CD8-positive, alpha-beta memory T cell (primary cell): ENCODE measurements at regions of chr9 and their contacts with region 1.

Region 1: GRCh38 chr9:107340920-107341632 is 58.0 kb downstream of the RAD23B start:
- DNase-seq: peak; percentile 61 to 86 (median 70)
- H3K4me3 ChIP-seq: no peak overlapping the region
- H3K4me3 Mint-ChIP-seq: peak overlapping the region in 3 of 7 donors; percentile 35 to 68 (median 38)
- H3K27ac ChIP-seq: no peak overlapping the region
- H3K27ac Mint-ChIP-seq: peak overlapping the region in 3 of 8 donors; percentile 40 to 75 (median 61)
- H3K4me1 ChIP-seq: no peaks in the 10 kb centered on the region
- H3K4me1 Mint-ChIP-seq: peaks cover 7 to 12% (median 12%) of the 10 kb centered on the region in 3 donors
- H3K27me3 ChIP-seq: no peaks in the 10 kb centered on the region
- H3K27me3 Mint-ChIP-seq: no peaks in the 10 kb centered on the region

Region 2: DNA sequence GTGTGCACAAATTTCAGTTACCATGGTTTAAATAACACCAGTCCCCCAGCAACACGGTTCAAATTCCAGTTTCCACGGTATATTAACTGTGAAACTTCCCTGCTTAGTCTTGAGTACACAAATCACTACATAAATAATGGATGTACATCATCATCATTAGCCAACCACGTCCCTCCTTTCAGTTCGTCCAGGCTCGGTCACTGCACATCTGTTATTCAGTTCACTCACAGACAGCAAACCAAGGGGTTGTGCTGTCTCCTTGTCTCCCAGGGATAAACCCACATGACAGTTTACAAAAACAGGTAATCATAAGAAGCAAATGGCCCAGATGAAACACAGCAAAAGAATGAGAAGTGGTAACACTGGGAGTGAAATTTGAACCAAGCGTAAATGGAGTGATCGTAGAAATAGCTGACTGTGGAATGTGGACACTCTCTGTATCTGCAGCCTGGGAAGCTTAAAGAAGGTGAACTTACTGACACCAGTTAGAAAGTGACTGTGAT is 119.0 kb before region 1 on chr9:
- CTCF ChIA-PET with region 1: interaction called, 10 read pairs
- POLR2A ChIA-PET with region 1: no interaction called
- DNase-seq: no peak
- H3K4me3 ChIP-seq: no peak overlapping the region
- H3K4me3 Mint-ChIP-seq: no peak overlapping the region
- H3K27ac ChIP-seq: no peak overlapping the region
- H3K27ac Mint-ChIP-seq: no peak overlapping the region
- H3K4me1 ChIP-seq: no peaks in the 10 kb centered on the region
- H3K4me1 Mint-ChIP-seq: no peaks in the 10 kb centered on the region
- H3K27me3 ChIP-seq: no peaks in the 10 kb centered on the region
- H3K27me3 Mint-ChIP-seq: peaks cover 2 to 17% of the 10 kb centered on the region in 2 donors

Region 3: DNA sequence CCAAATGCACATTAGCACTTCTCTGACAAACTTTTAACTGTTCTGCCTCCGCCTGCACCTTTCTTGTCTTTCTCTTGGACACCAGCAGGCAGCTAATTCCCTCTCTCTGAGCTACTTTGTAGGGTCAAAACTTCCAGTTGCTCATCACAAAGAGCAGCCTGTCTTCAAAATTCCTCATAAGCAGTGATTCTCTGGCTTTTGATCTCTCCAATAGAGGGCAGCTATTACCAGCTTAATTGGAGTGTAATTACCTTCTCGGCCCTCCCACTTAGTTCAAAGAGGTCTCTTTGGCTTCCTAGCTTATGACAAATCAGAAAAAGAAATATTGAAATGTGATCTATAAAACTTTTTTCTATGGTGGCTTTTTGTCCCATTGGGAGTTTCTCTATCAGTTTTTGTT is 101.6 kb before region 1 on chr9:
- CTCF ChIA-PET with region 1: interaction called, 55 read pairs
- POLR2A ChIA-PET with region 1: no interaction called
- DNase-seq: peak in 1 of 5 donors; percentile 17
- H3K4me3 ChIP-seq: no peak overlapping the region
- H3K4me3 Mint-ChIP-seq: no peak overlapping the region
- H3K27ac ChIP-seq: no peak overlapping the region
- H3K27ac Mint-ChIP-seq: no peak overlapping the region
- H3K4me1 ChIP-seq: no peaks in the 10 kb centered on the region
- H3K4me1 Mint-ChIP-seq: peaks cover 5 to 10% (median 7%) of the 10 kb centered on the region in 3 donors
- H3K27me3 ChIP-seq: no peaks in the 10 kb centered on the region
- H3K27me3 Mint-ChIP-seq: peaks cover 3 to 5% of the 10 kb centered on the region in 2 donors

Region 4: GRCh38 chr9:107251756-107252322 is 89.2 kb before region 1 on chr9:
- CTCF ChIA-PET with region 1: interaction called, 12 read pairs
- POLR2A ChIA-PET with region 1: no interaction called
- DNase-seq: no peak
- H3K4me3 ChIP-seq: no peak overlapping the region
- H3K4me3 Mint-ChIP-seq: no peak overlapping the region
- H3K27ac ChIP-seq: no peak overlapping the region
- H3K27ac Mint-ChIP-seq: no peak overlapping the region
- H3K4me1 ChIP-seq: no peaks in the 10 kb centered on the region
- H3K4me1 Mint-ChIP-seq: peaks cover 0 to 1% (median 1%) of the 10 kb centered on the region in 3 donors
- H3K27me3 ChIP-seq: no peaks in the 10 kb centered on the region
- H3K27me3 Mint-ChIP-seq: peaks cover 12 to 14% of the 10 kb centered on the region in 2 donors

Region 5: GRCh38 chr9:107282753-107283625 is 58.1 kb before region 1 on chr9 and contains the start of gene RAD23B:
- CTCF ChIA-PET with region 1: interaction called, 13 read pairs
- POLR2A ChIA-PET with region 1: interaction called, 3 read pairs
- DNase-seq: peak; percentile 97 to 99 (median 99)
- H3K4me3 ChIP-seq: peak within 1 kb of the TSS; percentile 86
- H3K4me3 Mint-ChIP-seq: peak within 1 kb of the TSS; percentile 89 to 99 (median 96)
- H3K27ac ChIP-seq: peak within 1 kb of the TSS; percentile 85
- H3K27ac Mint-ChIP-seq: peak within 1 kb of the TSS; percentile 76 to 99 (median 97)
- H3K4me1 ChIP-seq: peaks cover 32% of the 10 kb centered on the region
- H3K4me1 Mint-ChIP-seq: peaks cover 40 to 47% (median 46%) of the 10 kb centered on the region in 3 donors
- H3K27me3 ChIP-seq: no peaks in the 10 kb centered on the region
- H3K27me3 Mint-ChIP-seq: peaks cover 0 to 3% of the 10 kb centered on the region in 2 donors
- total RNA-seq, gene RAD23B: 146 to 150 TPM

Region 6: DNA sequence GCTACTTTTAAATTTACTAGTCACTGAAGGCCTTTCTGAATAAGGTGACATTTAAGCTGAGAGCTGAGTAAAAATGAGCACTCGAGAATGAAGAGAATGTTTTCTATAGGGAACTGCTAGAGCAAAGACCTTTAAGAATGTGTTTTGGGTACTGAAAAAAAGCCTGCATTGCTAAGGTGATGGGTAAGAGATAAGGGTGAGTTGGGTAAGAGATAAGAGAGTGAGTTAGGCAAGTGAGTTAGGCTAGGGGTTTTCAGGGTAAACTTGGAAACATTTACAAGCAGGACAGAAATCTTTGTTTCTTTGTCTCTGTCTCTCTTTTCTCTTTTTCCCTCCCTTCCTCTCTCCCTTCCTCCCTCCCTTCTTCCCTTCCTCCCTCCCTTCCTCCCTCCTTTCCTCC is 52.4 kb before region 1 on chr9:
- CTCF ChIA-PET with region 1: interaction called, 13 read pairs
- POLR2A ChIA-PET with region 1: no interaction called
- DNase-seq: no peak
- H3K4me3 ChIP-seq: no peak overlapping the region
- H3K4me3 Mint-ChIP-seq: peak overlapping the region in 4 of 7 donors; percentile 0 to 44 (median 24)
- H3K27ac ChIP-seq: no peak overlapping the region
- H3K27ac Mint-ChIP-seq: peak overlapping the region in 2 of 8 donors; percentile 30 to 47
- H3K4me1 ChIP-seq: peaks cover 66% of the 10 kb centered on the region
- H3K4me1 Mint-ChIP-seq: peaks cover 76 to 96% (median 94%) of the 10 kb centered on the region in 3 donors
- H3K27me3 ChIP-seq: no peaks in the 10 kb centered on the region
- H3K27me3 Mint-ChIP-seq: no peaks in the 10 kb centered on the region

Region 7: DNA sequence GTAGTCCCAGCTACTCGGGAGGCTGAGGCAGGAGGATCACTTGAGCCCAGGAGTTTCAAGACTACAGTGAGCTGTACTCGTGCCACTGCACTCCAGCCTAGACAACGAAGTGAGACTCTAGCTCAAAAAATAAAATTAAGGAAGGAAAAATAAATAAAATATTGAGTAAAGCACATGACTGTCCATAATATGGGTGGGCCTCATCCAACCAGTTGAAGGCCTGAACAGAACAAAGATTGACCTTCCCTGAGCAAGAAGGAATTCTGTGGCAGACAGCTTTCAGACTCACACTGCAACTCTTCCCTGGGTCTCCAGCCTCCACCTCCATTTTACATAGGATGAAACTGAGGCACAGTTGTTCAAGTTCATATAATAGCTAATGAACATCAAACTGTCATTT is 14.3 kb after region 1 on chr9:
- CTCF ChIA-PET with region 1: interaction called, 16 read pairs
- POLR2A ChIA-PET with region 1: no interaction called
- DNase-seq: no peak
- H3K4me3 ChIP-seq: no peak overlapping the region
- H3K4me3 Mint-ChIP-seq: no peak overlapping the region
- H3K27ac ChIP-seq: no peak overlapping the region
- H3K27ac Mint-ChIP-seq: no peak overlapping the region
- H3K4me1 ChIP-seq: no peaks in the 10 kb centered on the region
- H3K4me1 Mint-ChIP-seq: no peaks in the 10 kb centered on the region
- H3K27me3 ChIP-seq: no peaks in the 10 kb centered on the region
- H3K27me3 Mint-ChIP-seq: peaks cover 9 to 40% of the 10 kb centered on the region in 2 donors

Region 8: DNA sequence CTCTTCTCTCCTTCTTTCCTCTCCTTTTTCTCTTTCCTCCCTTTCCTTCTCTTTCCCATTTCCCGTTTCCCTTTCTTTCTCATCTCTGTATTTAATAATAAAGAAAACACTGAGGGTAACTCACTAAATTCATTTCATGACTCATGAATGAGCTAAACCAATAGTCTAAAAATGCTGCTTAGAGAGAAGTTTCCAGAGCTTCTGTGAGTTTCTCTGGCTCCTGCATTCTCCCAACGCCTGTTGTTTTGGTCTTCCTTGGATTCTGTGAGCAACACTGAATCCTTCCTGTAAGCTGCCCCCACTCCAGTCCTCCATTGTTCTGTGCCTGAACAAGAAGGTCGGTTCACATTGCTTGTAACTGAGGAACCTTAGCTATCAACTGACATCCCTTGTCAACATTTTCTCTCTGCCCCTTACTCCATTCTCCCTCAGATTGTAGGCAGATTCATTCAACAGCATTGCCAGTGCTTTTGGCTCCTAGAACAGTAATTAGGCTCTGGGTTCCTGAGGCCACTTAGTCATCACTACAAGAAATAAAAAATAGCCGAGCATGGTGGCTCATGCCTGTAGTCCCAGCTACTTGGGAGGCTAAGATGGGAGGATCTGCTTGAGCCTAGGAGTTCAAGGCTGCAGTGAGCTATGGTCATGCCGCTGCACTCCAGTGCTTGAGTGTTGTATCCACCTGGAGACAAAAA is 386.2 kb after region 1 on chr9:
- CTCF ChIA-PET with region 1: no interaction called
- POLR2A ChIA-PET with region 1: no interaction called
- DNase-seq: no peak
- H3K4me3 ChIP-seq: no peak overlapping the region
- H3K4me3 Mint-ChIP-seq: no peak overlapping the region
- H3K27ac ChIP-seq: no peak overlapping the region
- H3K27ac Mint-ChIP-seq: no peak overlapping the region
- H3K4me1 ChIP-seq: no peaks in the 10 kb centered on the region
- H3K4me1 Mint-ChIP-seq: no peaks in the 10 kb centered on the region
- H3K27me3 ChIP-seq: no peaks in the 10 kb centered on the region
- H3K27me3 Mint-ChIP-seq: peaks cover 0 to 1% of the 10 kb centered on the region in 2 donors